Caco-2 (cell line): ENCODE measurements at regions of chr20 and their contacts with region 1.

Region 1: GRCh38 chr20:4613718-4614620 is 107.7 kb upstream of the PRND start:
- DNase-seq: peak in 1 of 2 experiments; percentile 41
- H3K4me3 ChIP-seq: no peak overlapping the region
- H3K4me3 Mint-ChIP-seq: no peak overlapping the region
- H3K27ac Mint-ChIP-seq: no peak overlapping the region
- H3K4me1 ChIP-seq: no peaks in the 10 kb centered on the region
- H3K4me1 Mint-ChIP-seq: no peaks in the 10 kb centered on the region
- H3K27me3 ChIP-seq: no peaks in the 10 kb centered on the region
- H3K27me3 Mint-ChIP-seq: peaks cover 17% of the 10 kb centered on the region
- CTCF ChIP-seq: peak; percentile 11 to 29

Region 2: GRCh38 chr20:4502756-4503155 is 111.2 kb before region 1 on chr20:
- CTCF ChIA-PET with region 1: no interaction called
- POLR2A ChIA-PET with region 1: no interaction called
- intact Hi-C with region 1: no loop called
- DNase-seq: no peak
- H3K4me3 ChIP-seq: no peak overlapping the region
- H3K4me3 Mint-ChIP-seq: no peak overlapping the region
- H3K27ac Mint-ChIP-seq: no peak overlapping the region
- H3K4me1 ChIP-seq: no peaks in the 10 kb centered on the region
- H3K4me1 Mint-ChIP-seq: no peaks in the 10 kb centered on the region
- H3K27me3 ChIP-seq: no peaks in the 10 kb centered on the region
- H3K27me3 Mint-ChIP-seq: no peaks in the 10 kb centered on the region
- CTCF ChIP-seq: no peak

Region 3: GRCh38 chr20:4637081-4637797 is 23.3 kb after region 1 on chr20:
- CTCF ChIA-PET with region 1: no interaction called
- POLR2A ChIA-PET with region 1: no interaction called
- intact Hi-C with region 1: no loop called
- DNase-seq: no peak
- H3K4me3 ChIP-seq: no peak overlapping the region
- H3K4me3 Mint-ChIP-seq: no peak overlapping the region
- H3K27ac Mint-ChIP-seq: no peak overlapping the region
- H3K4me1 ChIP-seq: no peaks in the 10 kb centered on the region
- H3K4me1 Mint-ChIP-seq: no peaks in the 10 kb centered on the region
- H3K27me3 ChIP-seq: no peaks in the 10 kb centered on the region; the same call in 1 of the 2 replicates
- H3K27me3 Mint-ChIP-seq: peaks cover 16% of the 10 kb centered on the region
- CTCF ChIP-seq: no peak

Region 4: GRCh38 chr20:4720041-4720976 is 106.3 kb after region 1 on chr20:
- CTCF ChIA-PET with region 1: interaction called, 12 read pairs
- POLR2A ChIA-PET with region 1: no interaction called
- intact Hi-C with region 1: loop called (anchors 1 kb)
- DNase-seq: peak; percentile 63 to 73
- H3K4me3 ChIP-seq: no peak overlapping the region
- H3K4me3 Mint-ChIP-seq: peak overlapping the region; percentile 42
- H3K27ac Mint-ChIP-seq: no peak overlapping the region
- H3K4me1 ChIP-seq: peaks cover 4% of the 10 kb centered on the region; the same call in 1 of the 2 replicates
- H3K4me1 Mint-ChIP-seq: peaks cover 6% of the 10 kb centered on the region
- H3K27me3 ChIP-seq: no peaks in the 10 kb centered on the region; the same call in 1 of the 2 replicates
- H3K27me3 Mint-ChIP-seq: no peaks in the 10 kb centered on the region
- CTCF ChIP-seq: peak; percentile 85

Region 5: DNA sequence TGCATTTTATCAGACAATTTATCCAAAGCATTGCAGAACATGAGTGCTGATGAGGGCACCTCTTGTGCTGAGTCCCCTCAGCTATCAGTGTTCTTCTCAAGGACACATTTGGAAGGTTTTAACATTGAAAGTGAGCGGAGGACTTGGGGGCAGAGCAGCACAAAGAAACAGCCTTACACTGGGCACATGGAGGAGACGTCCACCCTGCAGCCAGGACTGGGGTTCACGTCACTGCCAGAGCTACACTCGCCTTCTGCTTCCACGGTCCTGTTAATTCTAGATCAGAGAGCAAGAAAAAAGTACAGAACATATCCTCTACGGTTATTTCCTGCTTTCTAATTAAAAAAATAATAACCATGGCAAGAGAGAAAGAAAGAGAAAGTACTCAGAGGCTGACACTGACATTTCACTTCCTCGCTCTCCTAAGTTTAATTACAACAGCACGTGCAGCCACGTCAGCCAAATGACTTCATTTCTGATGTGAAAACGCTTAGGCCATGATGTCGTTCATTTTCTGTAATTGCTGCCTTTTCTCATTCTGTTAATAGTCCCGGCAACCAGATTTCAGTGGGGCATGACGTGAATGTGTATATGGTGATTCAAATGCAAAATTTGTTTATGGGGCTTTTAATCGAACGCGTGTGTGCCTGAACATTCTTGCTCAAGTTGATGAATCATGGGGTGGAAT is 112.9 kb after region 1 on chr20:
- CTCF ChIA-PET with region 1: interaction called, 12 read pairs
- POLR2A ChIA-PET with region 1: no interaction called
- intact Hi-C with region 1: no loop called
- DNase-seq: no peak
- H3K4me3 ChIP-seq: no peak overlapping the region
- H3K4me3 Mint-ChIP-seq: no peak overlapping the region
- H3K27ac Mint-ChIP-seq: no peak overlapping the region
- H3K4me1 ChIP-seq: no peaks in the 10 kb centered on the region
- H3K4me1 Mint-ChIP-seq: no peaks in the 10 kb centered on the region
- H3K27me3 ChIP-seq: no peaks in the 10 kb centered on the region; the same call in 1 of the 2 replicates
- H3K27me3 Mint-ChIP-seq: peaks cover 3% of the 10 kb centered on the region
- CTCF ChIP-seq: no peak